B cell (primary cell): ENCODE measurements at regions of chr17 and their contacts with region 1.

Region 1: DNA sequence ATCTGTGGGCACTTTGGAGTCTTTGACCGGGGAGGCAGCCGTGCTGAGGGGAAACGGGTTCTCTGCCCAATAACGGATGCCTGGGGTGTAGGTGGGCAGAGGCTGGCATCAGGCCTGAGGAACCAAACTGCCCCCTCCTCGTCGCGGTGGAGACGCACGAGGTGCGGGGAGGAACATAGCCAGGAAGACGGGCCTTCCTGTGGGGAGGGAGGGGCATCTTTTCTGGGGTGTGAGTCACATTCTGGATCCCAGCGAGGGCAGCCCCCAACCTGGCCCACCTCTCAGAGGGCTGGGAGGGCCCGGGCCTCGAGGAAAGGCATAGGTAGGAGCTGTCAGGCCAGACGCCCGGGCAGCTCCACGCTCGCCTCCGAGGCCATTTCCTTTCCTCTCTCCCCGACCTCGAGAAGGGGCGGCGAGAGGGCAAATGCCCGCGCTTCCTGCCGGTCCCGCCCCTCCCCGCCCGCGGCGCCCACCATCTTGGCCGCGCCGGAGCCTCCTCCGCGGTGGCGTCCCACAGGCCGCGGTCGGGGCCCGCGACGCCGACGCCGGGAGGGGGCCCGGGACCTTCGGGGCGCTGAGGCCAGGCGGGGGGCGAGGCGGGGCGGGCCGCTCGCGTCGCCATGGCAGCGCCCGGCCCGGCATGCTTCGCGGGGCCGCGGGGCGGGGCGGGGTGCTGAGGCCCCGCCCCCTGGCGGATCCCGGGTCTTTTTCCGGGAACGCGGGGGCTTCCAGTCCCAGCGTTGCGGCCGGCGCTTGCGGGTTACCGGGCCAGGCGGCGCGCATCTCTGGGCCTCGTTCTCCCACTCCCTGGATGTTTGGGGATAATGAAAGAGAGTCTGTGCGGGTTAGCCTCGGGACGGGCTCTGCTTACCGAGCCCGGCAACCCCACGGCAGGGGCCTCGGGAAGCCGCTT is 13.2 kb downstream of the RAI1 start:
- DNase-seq: peak; percentile 83
- ATAC-seq: peak; percentile 75
- H3K4me3 ChIP-seq: peak overlapping the region; percentile 69 to 90 (median 85)
- H3K4me3 Mint-ChIP-seq: peak overlapping the region; percentile 95
- H3K27ac ChIP-seq: peak overlapping the region; percentile 88 to 94
- H3K27ac Mint-ChIP-seq: peak overlapping the region; percentile 98
- H3K4me1 ChIP-seq: peaks cover 48 to 52% of the 10 kb centered on the region in 2 donors
- H3K4me1 Mint-ChIP-seq: peaks cover 57% of the 10 kb centered on the region
- H3K27me3 ChIP-seq: no peaks in the 10 kb centered on the region
- H3K27me3 Mint-ChIP-seq: no peaks in the 10 kb centered on the region
- CTCF ChIP-seq: no peak

Region 2: DNA sequence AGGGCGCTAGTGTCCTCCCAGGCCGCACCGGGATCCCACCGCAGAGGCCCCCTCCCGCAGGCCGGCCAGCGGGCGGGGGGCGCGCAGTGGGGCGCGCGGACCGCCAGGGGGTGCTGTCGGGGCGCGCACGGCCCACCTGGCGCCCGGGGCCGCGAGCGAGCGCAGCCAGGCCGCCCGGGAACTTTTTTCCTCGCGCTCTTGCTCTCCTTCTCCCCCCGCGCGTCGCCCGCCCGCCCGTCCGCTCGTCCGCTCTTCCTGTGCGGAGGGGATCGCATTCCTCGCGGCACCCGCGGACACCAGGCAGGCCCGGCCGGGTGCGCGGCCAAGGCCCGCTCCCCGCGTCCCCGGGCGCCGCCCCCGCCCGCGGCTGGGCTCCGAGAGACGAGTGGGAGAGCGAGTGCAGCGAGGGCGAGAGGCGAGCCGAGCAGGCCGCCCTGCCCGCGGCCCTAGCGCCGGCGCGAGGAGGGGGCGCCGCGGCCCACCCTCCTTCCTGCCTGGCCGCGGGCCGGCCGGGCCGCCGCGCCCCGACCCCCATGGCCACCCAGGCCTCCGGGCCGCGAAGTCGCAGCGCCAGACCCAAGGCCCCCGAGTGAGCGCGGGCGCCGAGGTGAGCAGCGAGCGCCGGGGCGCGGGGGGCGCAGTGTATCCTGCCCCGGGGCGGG is 13.1 kb before region 1 on chr17 and contains the start of gene RAI1:
- CTCF ChIA-PET with region 1: interaction called, 14 read pairs
- POLR2A ChIA-PET with region 1: interaction called, 11 read pairs
- intact Hi-C with region 1: loop called (anchors 1 kb)
- DNase-seq: peak; percentile 90
- ATAC-seq: peak; percentile 64
- H3K4me3 ChIP-seq: peak within 1 kb of the TSS in 4 of 5 experiments; percentile 66 to 86 (median 72)
- H3K4me3 Mint-ChIP-seq: peak within 1 kb of the TSS; percentile 91
- H3K27ac ChIP-seq: peak within 1 kb of the TSS; percentile 86 to 97
- H3K27ac Mint-ChIP-seq: peak within 1 kb of the TSS; percentile 88
- H3K4me1 ChIP-seq: peaks cover 7 to 19% of the 10 kb centered on the region in 2 donors
- H3K4me1 Mint-ChIP-seq: peaks cover 30% of the 10 kb centered on the region
- H3K27me3 ChIP-seq: peaks cover 0 to 3% (median 0%) of the 10 kb centered on the region in 4 experiments
- H3K27me3 Mint-ChIP-seq: peaks cover 5% of the 10 kb centered on the region
- CTCF ChIP-seq: peak; percentile 74
- total RNA-seq, gene RAI1: 33.6 and 34.0 TPM in 2 replicates

Region 3: GRCh38 chr17:17729620-17730249 is 35.3 kb after region 1 on chr17:
- CTCF ChIA-PET with region 1: interaction called, 5 read pairs
- POLR2A ChIA-PET with region 1: no interaction called
- intact Hi-C with region 1: loop called (anchors 5 kb)
- DNase-seq: peak; percentile 76
- ATAC-seq: peak; percentile 90
- H3K4me3 ChIP-seq: no peak overlapping the region
- H3K4me3 Mint-ChIP-seq: no peak overlapping the region
- H3K27ac ChIP-seq: no peak overlapping the region
- H3K27ac Mint-ChIP-seq: peak overlapping the region; percentile 12
- H3K4me1 ChIP-seq: peaks cover 9 to 20% of the 10 kb centered on the region in 2 donors
- H3K4me1 Mint-ChIP-seq: peaks cover 23% of the 10 kb centered on the region
- H3K27me3 ChIP-seq: no peaks in the 10 kb centered on the region
- H3K27me3 Mint-ChIP-seq: no peaks in the 10 kb centered on the region
- CTCF ChIP-seq: peak; percentile 81

Region 4: GRCh38 chr17:17836250-17836817 is 141.9 kb after region 1 on chr17:
- CTCF ChIA-PET with region 1: interaction called, 3 read pairs
- POLR2A ChIA-PET with region 1: no interaction called
- intact Hi-C with region 1: loop called (anchors 5 kb)
- DNase-seq: peak; percentile 98
- ATAC-seq: peak; percentile 69
- H3K4me3 ChIP-seq: peak overlapping the region; percentile 23 to 91 (median 89)
- H3K4me3 Mint-ChIP-seq: peak overlapping the region; percentile 88
- H3K27ac ChIP-seq: peak overlapping the region; percentile 93 to 97
- H3K27ac Mint-ChIP-seq: peak overlapping the region; percentile 91
- H3K4me1 ChIP-seq: peaks cover 45 to 64% of the 10 kb centered on the region in 2 donors
- H3K4me1 Mint-ChIP-seq: peaks cover 61% of the 10 kb centered on the region
- H3K27me3 ChIP-seq: no peaks in the 10 kb centered on the region
- H3K27me3 Mint-ChIP-seq: no peaks in the 10 kb centered on the region
- CTCF ChIP-seq: no peak

Region 5: DNA sequence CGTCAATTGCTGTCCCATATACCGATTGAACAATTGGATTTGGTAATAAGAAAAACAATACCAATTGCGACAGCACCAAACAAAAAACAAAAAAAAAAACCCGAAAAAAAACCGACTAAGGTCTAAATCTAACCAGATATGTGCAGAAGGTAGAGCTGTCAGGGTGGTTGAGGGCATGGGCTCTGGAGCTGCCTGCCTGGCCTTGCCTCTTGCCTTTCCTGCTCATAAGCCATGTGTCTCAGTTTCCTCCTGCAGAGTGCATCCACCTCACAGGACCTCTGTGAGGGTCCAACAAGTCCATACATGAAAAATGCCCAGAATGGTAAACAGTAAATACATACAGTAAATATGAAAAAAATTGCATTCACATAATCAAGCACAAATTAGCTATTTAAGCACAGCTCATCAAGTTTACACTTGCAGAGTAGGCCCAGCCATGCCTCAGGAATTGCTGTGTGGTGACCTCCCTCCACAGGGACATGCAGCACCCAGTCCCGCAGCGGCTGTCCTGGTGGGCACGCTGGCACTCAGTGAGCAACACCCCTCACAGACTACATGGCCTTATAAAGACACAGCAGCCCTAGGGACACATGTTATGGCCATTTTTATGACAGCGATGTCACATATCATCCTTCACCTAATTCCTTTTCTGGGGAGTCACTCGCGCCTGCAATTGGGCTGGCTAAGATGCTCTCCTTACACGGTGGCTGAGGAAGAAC is 931.9 kb after region 1 on chr17:
- CTCF ChIA-PET with region 1: no interaction called
- POLR2A ChIA-PET with region 1: no interaction called
- intact Hi-C with region 1: no loop called
- DNase-seq: peak; percentile 16
- ATAC-seq: no peak
- H3K4me3 ChIP-seq: no peak overlapping the region
- H3K4me3 Mint-ChIP-seq: peak overlapping the region; percentile 72
- H3K27ac ChIP-seq: no peak overlapping the region
- H3K27ac Mint-ChIP-seq: no peak overlapping the region
- H3K4me1 ChIP-seq: peaks cover 4 to 12% of the 10 kb centered on the region in 2 donors
- H3K4me1 Mint-ChIP-seq: peaks cover 12% of the 10 kb centered on the region
- H3K27me3 ChIP-seq: no peaks in the 10 kb centered on the region
- H3K27me3 Mint-ChIP-seq: no peaks in the 10 kb centered on the region
- CTCF ChIP-seq: no peak